Prostate gland (tissue), 2 donors: ENCODE measurements at regions of chr1 and their contacts with region 1.

Region 1: DNA sequence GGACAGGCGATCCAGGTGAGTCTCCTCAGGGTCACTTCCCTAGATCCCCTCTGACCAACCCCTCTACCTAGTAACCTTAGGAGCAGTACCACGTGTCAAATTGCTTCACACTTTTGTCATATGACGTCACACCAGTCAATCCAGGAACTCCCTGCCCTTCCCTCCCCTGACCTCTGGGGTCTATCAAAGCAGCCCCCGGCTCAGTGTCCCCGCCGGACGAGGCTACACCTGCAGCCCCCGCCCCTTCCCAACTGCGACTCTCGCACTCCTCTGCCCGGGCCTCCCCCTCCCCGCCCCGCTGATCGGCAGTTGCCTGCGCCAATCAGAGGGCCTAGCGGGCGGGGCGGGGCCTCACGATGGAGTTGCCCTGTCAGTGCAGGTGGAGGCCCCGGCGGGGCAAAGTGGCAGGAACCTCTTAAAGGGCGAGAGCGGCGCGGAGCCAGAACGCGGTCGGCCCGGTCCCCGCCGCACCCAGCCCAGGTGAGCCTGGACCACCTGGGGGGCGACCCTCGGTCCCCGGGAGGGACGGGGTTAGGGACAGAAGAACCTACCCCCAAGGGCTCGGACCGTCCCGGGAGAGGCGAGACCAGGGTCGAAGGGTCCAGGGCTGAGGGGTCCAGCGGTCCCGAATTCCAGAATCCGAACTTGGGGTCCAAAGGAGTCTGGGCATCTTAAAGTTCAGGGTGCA is 27.5 kb upstream of the EPB41 start:
- DNase-seq: peak; percentile 85
- H3K4me3 ChIP-seq: peak overlapping the region; percentile 90 to 91
- H3K27ac ChIP-seq: peak overlapping the region; percentile 66 to 75
- H3K4me1 ChIP-seq: no peaks in the 10 kb centered on the region
- H3K27me3 ChIP-seq: no peaks in the 10 kb centered on the region
- CTCF ChIP-seq: peak in 1 of 4 experiments; percentile 8
- POLR2A ChIP-seq: peak; percentile 89

Region 2: GRCh38 chr1:28518000-28518744 is 368.7 kb before region 1 on chr1:
- intact Hi-C with region 1: loop called (anchors 10 kb)
- DNase-seq: peak; percentile 88
- H3K4me3 ChIP-seq: peak overlapping the region; percentile 59 to 65
- H3K27ac ChIP-seq: peak overlapping the region; percentile 72 to 83
- H3K4me1 ChIP-seq: no peaks in the 10 kb centered on the region
- H3K27me3 ChIP-seq: no peaks in the 10 kb centered on the region
- CTCF ChIP-seq: peak; percentile 97 to 99 (median 98)
- POLR2A ChIP-seq: peak; percentile 67

Region 3: GRCh38 chr1:28914228-28915030 is 27.6 kb after region 1 on chr1 and contains the start of gene EPB41:
- intact Hi-C with region 1: loop called (anchors 2 kb)
- DNase-seq: peak; percentile 94
- H3K4me3 ChIP-seq: peak within 1 kb of the TSS; percentile 70 to 78
- H3K27ac ChIP-seq: peak within 1 kb of the TSS; percentile 71 to 75
- H3K4me1 ChIP-seq: peaks cover 6% of the 10 kb centered on the region
- H3K27me3 ChIP-seq: no peaks in the 10 kb centered on the region
- CTCF ChIP-seq: peak in 2 of 4 experiments; percentile 13 to 18
- POLR2A ChIP-seq: peak; percentile 76
- total RNA-seq, gene EPB41: 39.4 to 54.4 TPM

Region 4: GRCh38 chr1:28983509-28984310 is 96.8 kb after region 1 on chr1:
- intact Hi-C with region 1: loop called (anchors 5 kb)
- DNase-seq: no peak
- H3K4me3 ChIP-seq: no peak overlapping the region
- H3K27ac ChIP-seq: no peak overlapping the region
- H3K4me1 ChIP-seq: no peaks in the 10 kb centered on the region
- H3K27me3 ChIP-seq: no peaks in the 10 kb centered on the region
- CTCF ChIP-seq: peak in 1 of 4 experiments; percentile 10
- POLR2A ChIP-seq: no peak

Region 5: DNA sequence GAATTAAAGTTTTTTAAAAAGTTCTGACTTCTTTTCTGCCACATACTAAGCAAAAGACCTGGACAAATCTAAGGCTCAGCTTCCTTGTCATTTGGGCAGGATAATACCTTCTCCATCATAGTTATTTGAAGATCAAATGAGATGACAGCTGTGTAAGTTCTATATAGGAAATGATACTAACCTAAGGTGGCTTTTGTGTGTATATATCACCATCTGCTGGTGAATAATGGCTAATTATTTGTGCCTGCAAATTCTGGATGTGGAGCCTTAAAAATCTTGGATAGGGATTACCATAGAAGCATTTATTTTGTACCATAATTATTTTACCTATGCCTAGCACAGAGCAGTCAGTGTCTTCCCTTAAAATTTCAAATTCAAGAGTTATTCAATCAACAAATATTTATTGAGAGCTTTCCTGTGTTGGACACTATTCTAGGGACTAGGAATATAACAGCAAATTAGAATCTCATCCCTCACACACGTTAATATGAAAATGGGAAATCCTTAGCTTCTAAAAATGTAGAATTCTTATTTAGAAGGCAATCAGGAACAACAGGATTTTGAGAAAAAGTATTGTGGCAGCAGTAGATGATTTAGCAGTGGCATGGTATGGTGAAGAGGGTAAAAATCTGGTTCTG is 147.1 kb after region 1 on chr1:
- intact Hi-C with region 1: loop called (anchors 2 kb)
- DNase-seq: no peak
- H3K4me3 ChIP-seq: no peak overlapping the region
- H3K27ac ChIP-seq: no peak overlapping the region
- H3K4me1 ChIP-seq: no peaks in the 10 kb centered on the region
- H3K27me3 ChIP-seq: no peaks in the 10 kb centered on the region
- CTCF ChIP-seq: peak; percentile 18 to 87 (median 77)
- POLR2A ChIP-seq: no peak

Region 6: GRCh38 chr1:29055160-29055559 is 168.3 kb after region 1 on chr1:
- intact Hi-C with region 1: no loop called
- DNase-seq: no peak
- H3K4me3 ChIP-seq: no peak overlapping the region
- H3K27ac ChIP-seq: no peak overlapping the region
- H3K4me1 ChIP-seq: no peaks in the 10 kb centered on the region
- H3K27me3 ChIP-seq: no peaks in the 10 kb centered on the region
- CTCF ChIP-seq: no peak
- POLR2A ChIP-seq: no peak

Region 7: DNA sequence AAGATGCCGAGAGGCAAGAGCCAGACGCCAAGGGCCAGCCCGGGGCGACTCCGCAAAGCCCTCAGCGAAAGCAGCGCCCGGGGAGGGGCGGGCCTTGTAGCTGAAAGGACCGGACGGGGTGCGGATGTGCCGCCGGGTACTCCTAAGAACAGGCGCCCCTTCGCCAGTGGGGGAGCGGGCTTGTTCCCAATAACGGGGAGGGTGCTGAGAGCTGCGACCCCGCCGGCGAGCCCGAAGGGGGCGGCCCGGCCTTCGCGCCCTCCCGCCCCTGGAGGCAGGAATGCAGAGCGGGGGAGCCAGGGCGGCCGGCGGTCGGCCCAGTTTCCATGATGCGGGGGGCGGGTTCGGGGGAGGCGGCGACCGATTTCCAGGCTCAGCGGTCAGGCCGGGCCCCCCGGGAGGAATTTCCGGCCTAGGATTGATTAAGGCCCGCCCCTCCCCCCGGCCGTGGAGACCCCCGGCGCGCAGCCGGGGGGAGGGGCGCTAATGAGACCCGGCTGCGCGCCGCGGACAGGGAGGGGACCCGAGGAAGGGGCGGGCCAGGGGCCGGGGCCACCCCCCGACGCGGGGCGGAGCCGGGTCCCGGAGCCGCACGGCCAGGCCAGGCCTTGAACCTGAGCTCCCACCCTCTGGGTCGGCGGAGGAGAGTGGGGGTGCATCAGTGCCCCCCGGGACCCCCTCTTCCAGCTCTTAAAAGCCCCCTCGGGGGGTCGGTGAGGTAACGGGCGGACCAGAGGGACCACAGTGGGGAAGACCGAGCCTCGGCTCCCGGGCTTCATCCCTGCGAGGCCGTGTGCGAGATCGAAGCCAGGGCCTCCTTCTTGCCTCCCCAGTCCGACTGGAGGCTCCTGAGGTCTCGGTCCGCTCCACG is 237.7 kb after region 1 on chr1:
- intact Hi-C with region 1: loop called (anchors 2 kb)
- DNase-seq: no peak
- H3K4me3 ChIP-seq: peak overlapping the region; percentile 50 to 52
- H3K27ac ChIP-seq: peak overlapping the region; percentile 83 to 90
- H3K4me1 ChIP-seq: peaks cover 3% of the 10 kb centered on the region
- H3K27me3 ChIP-seq: no peaks in the 10 kb centered on the region
- CTCF ChIP-seq: peak; percentile 38 to 85 (median 68)
- POLR2A ChIP-seq: peak; percentile 29

Region 8: DNA sequence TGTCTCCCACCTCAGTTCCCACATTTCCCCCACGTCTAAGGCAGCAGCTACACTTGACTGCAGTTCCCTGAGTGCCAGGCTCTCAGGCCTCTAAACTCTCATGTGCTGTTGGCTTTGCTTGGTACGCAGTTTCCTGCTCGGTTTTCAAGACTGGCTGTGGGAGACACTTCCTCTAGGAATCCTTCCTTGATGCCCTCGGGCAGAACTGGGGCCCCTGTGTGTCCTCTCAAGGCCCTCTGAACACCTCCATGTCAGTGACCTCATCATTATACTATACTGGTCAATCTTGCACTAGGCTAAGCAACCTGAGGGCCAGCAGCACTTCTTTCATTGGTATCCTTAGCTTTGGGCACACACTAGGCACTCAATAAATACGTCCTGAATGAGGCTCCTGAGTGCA is 305.3 kb after region 1 on chr1:
- intact Hi-C with region 1: no loop called
- DNase-seq: no peak
- H3K4me3 ChIP-seq: no peak overlapping the region
- H3K27ac ChIP-seq: no peak overlapping the region
- H3K4me1 ChIP-seq: no peaks in the 10 kb centered on the region
- H3K27me3 ChIP-seq: no peaks in the 10 kb centered on the region
- CTCF ChIP-seq: no peak
- POLR2A ChIP-seq: no peak

Region 9: GRCh38 chr1:29202584-29203340 is 315.9 kb after region 1 on chr1:
- intact Hi-C with region 1: loop called (anchors 2 kb)
- DNase-seq: peak; percentile 97
- H3K4me3 ChIP-seq: no peak overlapping the region
- H3K27ac ChIP-seq: peak overlapping the region; percentile 55 to 75
- H3K4me1 ChIP-seq: no peaks in the 10 kb centered on the region
- H3K27me3 ChIP-seq: no peaks in the 10 kb centered on the region
- CTCF ChIP-seq: peak; percentile 96 to 98 (median 98)
- POLR2A ChIP-seq: no peak